Heart left ventricle (tissue), 16 donors: ENCODE measurements at regions of chr16 and their contacts with region 1.

Region 1: DNA sequence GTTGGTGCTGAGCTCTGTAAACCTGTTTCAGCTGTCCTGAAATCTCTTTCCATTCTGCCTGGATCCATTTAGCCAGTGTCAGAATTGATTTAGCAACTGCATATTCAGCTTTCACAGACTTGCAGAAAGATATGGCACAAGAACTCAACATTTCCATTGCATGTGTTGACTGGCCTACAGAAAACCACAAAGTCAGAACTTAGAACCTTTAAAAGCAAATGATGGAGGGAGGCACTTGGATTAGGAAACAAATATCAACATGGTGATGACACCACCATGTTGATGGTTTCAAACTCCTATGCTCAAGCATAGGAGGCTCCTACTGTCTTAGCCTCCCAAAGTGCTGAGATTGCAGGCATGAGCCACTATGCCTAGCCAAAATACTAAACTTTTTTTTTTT is 52.3 kb upstream of the ARL6IP1 start:
- DNase-seq: no peak
- ATAC-seq: no peak
- H3K4me3 ChIP-seq: no peak overlapping the region
- H3K27ac ChIP-seq: no peak overlapping the region
- H3K4me1 ChIP-seq: no peaks in the 10 kb centered on the region
- H3K27me3 ChIP-seq: no peaks in the 10 kb centered on the region
- CTCF ChIP-seq: no peak
- POLR2A ChIP-seq: no peak

Region 2: GRCh38 chr16:18816286-18816685 is 37.4 kb before region 1 on chr16:
- intact Hi-C with region 1: loop called in 1 of 10 experiments (anchors 5 kb)
- DNase-seq: no peak
- ATAC-seq: no peak
- H3K4me3 ChIP-seq: no peak overlapping the region
- H3K27ac ChIP-seq: no peak overlapping the region
- H3K4me1 ChIP-seq: peaks cover 0 to 4% (median 0%) of the 10 kb centered on the region in 12 donors
- H3K27me3 ChIP-seq: no peaks in the 10 kb centered on the region
- CTCF ChIP-seq: no peak
- POLR2A ChIP-seq: no peak